ENCODE measurements at regions of chr2 and their contacts with region 1.

Region 1: DNA sequence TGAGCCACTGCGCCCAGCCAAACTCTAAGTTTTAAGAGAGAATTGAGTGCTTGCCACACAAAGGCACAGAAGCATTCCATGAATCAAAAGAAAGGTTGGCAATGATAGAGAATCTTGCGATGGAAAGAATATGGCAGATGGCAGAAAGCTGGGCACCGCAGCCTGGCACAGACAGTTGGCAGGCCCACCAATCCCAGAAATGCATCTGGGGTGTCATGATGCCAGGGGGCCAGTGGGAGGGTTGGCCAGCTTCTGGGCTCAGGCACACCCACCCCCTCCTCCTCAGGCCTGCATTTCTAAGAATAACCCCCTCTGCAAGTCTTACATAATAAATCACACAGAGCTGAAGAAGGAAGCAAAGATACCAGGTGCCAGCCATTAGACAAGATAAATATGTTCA is 19.6 kb downstream of the ZNF2 start:
- DNase-seq: no peak
- ATAC-seq: no peak
- H3K4me3 ChIP-seq: no peak overlapping the region
- H3K4me3 Mint-ChIP-seq: no peak overlapping the region
- H3K27ac ChIP-seq: no peak overlapping the region
- H3K27ac Mint-ChIP-seq: peak overlapping the region in 1 of 9 donors; percentile 77
- H3K4me1 ChIP-seq: no peaks in the 10 kb centered on the region
- H3K4me1 Mint-ChIP-seq: no peaks in the 10 kb centered on the region
- H3K27me3 ChIP-seq: peaks cover 0 to 3% of the 10 kb centered on the region in 2 donors
- H3K27me3 Mint-ChIP-seq: peaks cover 0 to 7% (median 5%) of the 10 kb centered on the region in 5 donors

Region 2: DNA sequence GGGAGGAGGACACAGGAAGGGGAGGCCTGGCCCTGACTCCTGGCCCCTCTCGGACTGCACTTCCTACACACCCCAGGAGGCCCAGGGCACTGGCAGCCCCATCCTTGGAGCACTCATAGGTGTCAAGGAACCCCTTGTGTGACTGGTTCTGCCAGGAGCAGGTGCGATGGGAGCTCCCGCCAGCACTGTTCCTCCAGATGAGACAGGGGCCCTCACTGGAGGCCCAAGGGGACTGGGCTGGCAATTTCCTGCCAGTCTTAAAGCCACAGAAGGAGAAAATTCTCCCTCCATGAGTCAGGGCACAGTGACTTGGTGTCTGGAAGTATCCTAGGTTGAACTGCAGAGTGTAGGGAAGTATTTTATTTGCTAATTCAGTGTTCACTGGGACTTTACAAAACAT is 202.5 kb before region 1 on chr2:
- CTCF ChIA-PET with region 1: no interaction called
- POLR2A ChIA-PET with region 1: no interaction called
- intact Hi-C with region 1: no loop called
- DNase-seq: no peak
- ATAC-seq: no peak
- H3K4me3 ChIP-seq: no peak overlapping the region
- H3K4me3 Mint-ChIP-seq: no peak overlapping the region
- H3K27ac ChIP-seq: no peak overlapping the region
- H3K27ac Mint-ChIP-seq: no peak overlapping the region
- H3K4me1 ChIP-seq: no peaks in the 10 kb centered on the region
- H3K4me1 Mint-ChIP-seq: peaks cover 0 to 6% (median 0%) of the 10 kb centered on the region in 7 donors
- H3K27me3 ChIP-seq: no peaks in the 10 kb centered on the region
- H3K27me3 Mint-ChIP-seq: peaks cover 12 to 29% (median 19%) of the 10 kb centered on the region in 5 donors

Region 3: GRCh38 chr2:95165129-95166064 is 19.8 kb before region 1 on chr2 and contains the start of gene ZNF2:
- CTCF ChIA-PET with region 1: no interaction called
- POLR2A ChIA-PET with region 1: no interaction called
- intact Hi-C with region 1: no loop called
- DNase-seq: peak; percentile 92 to 98 (median 96)
- ATAC-seq: peak; percentile 97
- H3K4me3 ChIP-seq: peak within 1 kb of the TSS; percentile 91
- H3K4me3 Mint-ChIP-seq: peak within 1 kb of the TSS; percentile 97 to 100 (median 99)
- H3K27ac ChIP-seq: peak within 1 kb of the TSS; percentile 82
- H3K27ac Mint-ChIP-seq: peak within 1 kb of the TSS; percentile 91 to 99 (median 96)
- H3K4me1 ChIP-seq: peaks cover 4 to 13% of the 10 kb centered on the region in 2 donors
- H3K4me1 Mint-ChIP-seq: peaks cover 23 to 54% (median 42%) of the 10 kb centered on the region in 7 donors
- H3K27me3 ChIP-seq: no peaks in the 10 kb centered on the region
- H3K27me3 Mint-ChIP-seq: no peaks in the 10 kb centered on the region
- total RNA-seq, gene ZNF2: 1.5 to 10.2 (median 3.4) TPM

Region 4: GRCh38 chr2:95225658-95226057 is 40.5 kb after region 1 on chr2:
- CTCF ChIA-PET with region 1: no interaction called
- POLR2A ChIA-PET with region 1: no interaction called
- intact Hi-C with region 1: no loop called
- DNase-seq: no peak
- ATAC-seq: no peak
- H3K4me3 ChIP-seq: no peak overlapping the region
- H3K4me3 Mint-ChIP-seq: no peak overlapping the region
- H3K27ac ChIP-seq: no peak overlapping the region
- H3K27ac Mint-ChIP-seq: no peak overlapping the region
- H3K4me1 ChIP-seq: no peaks in the 10 kb centered on the region
- H3K4me1 Mint-ChIP-seq: no peaks in the 10 kb centered on the region
- H3K27me3 ChIP-seq: no peaks in the 10 kb centered on the region
- H3K27me3 Mint-ChIP-seq: no peaks in the 10 kb centered on the region

Region 5: DNA sequence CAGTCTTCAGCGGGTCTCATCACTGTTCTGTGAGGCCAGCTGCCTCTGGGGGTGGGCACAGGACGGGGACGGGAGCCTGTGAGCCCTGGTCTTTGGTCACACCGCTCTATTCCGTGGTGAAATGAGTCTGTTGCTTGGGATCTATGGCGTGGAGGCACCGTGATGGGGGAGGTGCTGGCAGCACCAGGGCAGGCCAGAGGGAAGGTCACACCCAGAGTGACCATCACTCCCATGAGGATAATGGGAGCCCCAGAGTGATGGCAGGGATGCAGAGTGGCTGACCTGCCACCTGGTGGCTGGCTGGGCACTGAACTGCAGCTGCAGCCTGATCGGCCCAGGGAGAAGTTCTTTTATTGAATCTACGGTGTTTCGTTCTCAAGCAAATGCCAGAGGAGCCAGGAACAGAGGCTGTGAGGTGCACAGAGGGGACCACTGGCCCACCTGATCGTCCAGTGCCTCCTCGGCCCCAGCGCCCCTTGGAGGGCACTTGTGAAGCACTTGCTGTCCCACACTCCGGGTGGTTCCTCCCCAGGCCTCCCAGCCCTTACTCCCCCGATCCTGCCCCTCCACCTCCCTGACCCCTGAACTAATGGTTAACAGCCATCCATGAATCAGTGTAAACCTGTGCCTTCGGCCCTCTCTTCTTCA is 129.9 kb after region 1 on chr2:
- CTCF ChIA-PET with region 1: no interaction called
- POLR2A ChIA-PET with region 1: no interaction called
- intact Hi-C with region 1: loop called in 1 of 2 experiments (anchors 10 kb)
- DNase-seq: no peak
- ATAC-seq: no peak
- H3K4me3 ChIP-seq: no peak overlapping the region
- H3K4me3 Mint-ChIP-seq: no peak overlapping the region
- H3K27ac ChIP-seq: no peak overlapping the region
- H3K27ac Mint-ChIP-seq: peak overlapping the region in 1 of 9 donors; percentile 24
- H3K4me1 ChIP-seq: no peaks in the 10 kb centered on the region
- H3K4me1 Mint-ChIP-seq: peaks cover 0 to 5% (median 0%) of the 10 kb centered on the region in 7 donors
- H3K27me3 ChIP-seq: no peaks in the 10 kb centered on the region
- H3K27me3 Mint-ChIP-seq: peaks cover 0 to 7% (median 0%) of the 10 kb centered on the region in 5 donors

Region 6: DNA sequence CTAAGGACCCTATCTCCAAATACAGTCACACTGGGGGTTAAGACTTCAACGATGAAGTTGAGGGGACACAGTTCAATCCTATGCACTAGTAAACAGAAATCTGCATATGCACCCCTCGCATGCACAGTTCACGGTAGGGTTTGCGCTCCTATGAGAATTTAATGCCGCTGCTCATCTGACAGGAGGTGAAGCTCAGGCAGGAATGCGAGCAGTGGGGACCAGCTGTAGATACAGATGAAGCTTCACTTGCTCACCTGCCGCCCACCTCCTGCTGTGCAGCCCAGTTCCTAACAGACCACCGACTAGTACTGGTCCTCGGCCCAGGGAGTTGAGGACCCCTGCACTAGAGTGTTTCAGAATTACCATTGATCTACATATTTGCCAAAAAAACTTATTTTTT is 177.3 kb after region 1 on chr2:
- CTCF ChIA-PET with region 1: no interaction called
- POLR2A ChIA-PET with region 1: no interaction called
- intact Hi-C with region 1: no loop called
- DNase-seq: no peak
- ATAC-seq: no peak
- H3K4me3 ChIP-seq: no peak overlapping the region
- H3K4me3 Mint-ChIP-seq: no peak overlapping the region
- H3K27ac ChIP-seq: no peak overlapping the region
- H3K27ac Mint-ChIP-seq: no peak overlapping the region
- H3K4me1 ChIP-seq: no peaks in the 10 kb centered on the region
- H3K4me1 Mint-ChIP-seq: no peaks in the 10 kb centered on the region
- H3K27me3 ChIP-seq: no peaks in the 10 kb centered on the region
- H3K27me3 Mint-ChIP-seq: peaks cover 5 to 21% (median 10%) of the 10 kb centered on the region in 5 donors